ENCODE measurements at regions of chr5 and their contacts with region 1.

Region 1: DNA sequence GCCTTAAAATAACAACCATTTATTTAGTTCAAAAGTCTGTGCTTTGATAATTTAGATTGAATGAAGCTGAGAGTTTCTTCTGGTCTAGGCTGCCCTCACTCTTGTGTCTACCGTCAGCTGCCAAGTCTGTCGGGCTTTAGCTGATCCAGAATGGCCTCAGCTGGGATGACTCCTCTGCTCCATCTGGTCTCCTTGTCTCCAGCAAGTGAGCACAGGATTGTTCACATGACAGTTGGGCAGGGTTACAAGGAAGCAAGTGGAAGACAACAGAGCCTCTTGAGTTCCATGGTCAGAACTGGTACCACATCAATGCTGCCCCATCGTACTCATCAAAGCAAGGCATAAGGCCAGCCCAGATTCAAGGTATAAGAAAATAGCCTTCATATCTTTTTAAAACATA is 9.0 kb downstream of the HTR1A start:
- DNase-seq: no peak
- H3K4me3 Mint-ChIP-seq: no peak overlapping the region
- H3K27ac Mint-ChIP-seq: no peak overlapping the region
- H3K4me1 Mint-ChIP-seq: no peaks in the 10 kb centered on the region
- H3K27me3 Mint-ChIP-seq: no peaks in the 10 kb centered on the region

Region 2: DNA sequence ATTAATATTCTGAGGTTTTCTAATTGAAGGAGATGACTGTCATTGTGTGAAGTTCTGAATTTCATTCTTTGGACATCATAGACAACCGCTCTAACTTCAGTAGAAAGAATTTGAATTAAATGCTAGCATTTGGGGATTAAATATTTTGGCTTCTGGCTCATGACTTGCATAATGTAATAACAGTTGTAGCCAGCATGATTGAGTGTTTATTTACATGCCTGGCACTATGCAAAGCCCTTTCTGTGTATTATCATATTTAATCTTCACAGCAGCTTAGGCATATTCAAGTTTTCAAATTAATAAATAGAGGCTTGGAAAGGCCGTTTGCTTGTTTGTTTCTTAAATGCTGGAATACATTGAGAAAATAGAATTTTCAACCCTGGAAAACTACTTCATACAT is 28.6 kb after region 1 on chr5:
- intact Hi-C with region 1: loop called (anchors 2 kb)
- DNase-seq: no peak
- H3K4me3 Mint-ChIP-seq: no peak overlapping the region
- H3K27ac Mint-ChIP-seq: no peak overlapping the region
- H3K4me1 Mint-ChIP-seq: no peaks in the 10 kb centered on the region
- H3K27me3 Mint-ChIP-seq: no peaks in the 10 kb centered on the region

Region 3: DNA sequence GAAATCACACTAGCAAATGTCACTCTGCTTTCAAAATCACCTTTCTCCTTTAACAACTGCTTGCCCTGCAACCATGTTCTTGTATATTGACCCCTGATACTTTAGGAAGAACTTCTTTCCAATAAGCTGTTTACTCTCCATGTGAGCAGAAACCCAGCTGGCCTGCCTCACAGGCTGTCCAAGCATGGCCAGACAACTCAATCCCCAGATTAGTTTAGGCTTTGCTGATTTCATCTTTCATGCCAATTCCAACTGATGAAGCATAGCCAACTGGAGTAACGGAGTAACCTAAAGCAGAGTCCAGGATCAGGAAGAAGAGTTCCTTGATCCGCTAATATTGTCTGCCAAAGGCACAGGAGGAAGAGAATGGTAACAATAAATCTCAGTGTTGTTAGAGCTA is 65.7 kb after region 1 on chr5:
- intact Hi-C with region 1: no loop called
- DNase-seq: no peak
- H3K4me3 Mint-ChIP-seq: no peak overlapping the region
- H3K27ac Mint-ChIP-seq: no peak overlapping the region
- H3K4me1 Mint-ChIP-seq: no peaks in the 10 kb centered on the region
- H3K27me3 Mint-ChIP-seq: no peaks in the 10 kb centered on the region

Measured in activated CD4-positive, alpha-beta T cell treated with anti-CD3 and anti-CD28 coated beads, Interleukin-2, amount 10 ng/mL, durations not matched to agents 24 days and 14 days (primary cell).